Mammary epithelial cell (primary cell): ENCODE measurements at regions of chr9 and their contacts with region 1.

Region 1: GRCh38 chr9:91193658-91194391 is 167.9 kb downstream of the AUH start:
- DNase-seq: peak; percentile 48
- H3K4me3 ChIP-seq: no peak overlapping the region
- H3K27ac ChIP-seq: peak overlapping the region; percentile 45
- H3K4me1 ChIP-seq: peaks cover 38% of the 10 kb centered on the region
- H3K27me3 ChIP-seq: no peaks in the 10 kb centered on the region
- CTCF ChIP-seq: no peak

Region 2: GRCh38 chr9:91273853-91274552 is 80.2 kb after region 1 on chr9:
- CTCF ChIA-PET with region 1: no interaction called
- dilution Hi-C with region 1: no loop called
- in situ Hi-C with region 1: no loop called
- intact Hi-C with region 1: loop called (anchors 10 kb)
- DNase-seq: peak; percentile 71
- H3K4me3 ChIP-seq: no peak overlapping the region
- H3K27ac ChIP-seq: no peak overlapping the region
- H3K4me1 ChIP-seq: no peaks in the 10 kb centered on the region
- H3K27me3 ChIP-seq: no peaks in the 10 kb centered on the region
- CTCF ChIP-seq: no peak

Region 3: GRCh38 chr9:91298311-91298710 is 104.5 kb after region 1 on chr9:
- CTCF ChIA-PET with region 1: no interaction called
- dilution Hi-C with region 1: no loop called
- in situ Hi-C with region 1: no loop called
- intact Hi-C with region 1: no loop called
- DNase-seq: peak; percentile 78
- H3K4me3 ChIP-seq: no peak overlapping the region
- H3K27ac ChIP-seq: no peak overlapping the region
- H3K4me1 ChIP-seq: peaks cover 21% of the 10 kb centered on the region
- H3K27me3 ChIP-seq: no peaks in the 10 kb centered on the region
- CTCF ChIP-seq: no peak